ENCODE measurements at regions of chr22 and their contacts with region 1.

Region 1: GRCh38 chr22:19730655-19731360 is 7.5 kb downstream of the GP1BB start:
- DNase-seq: peak; percentile 89
- H3K4me3 Mint-ChIP-seq: peak overlapping the region; percentile 65
- H3K27ac Mint-ChIP-seq: no peak overlapping the region
- H3K4me1 Mint-ChIP-seq: peaks cover 4% of the 10 kb centered on the region
- H3K27me3 Mint-ChIP-seq: peaks cover 58% of the 10 kb centered on the region

Region 2: GRCh38 chr22:19756288-19757128 is 25.7 kb after region 1 on chr22:
- CTCF ChIA-PET with region 1: interaction called, 15 read pairs
- DNase-seq: peak; percentile 84
- H3K4me3 Mint-ChIP-seq: peak overlapping the region; percentile 60
- H3K27ac Mint-ChIP-seq: no peak overlapping the region
- H3K4me1 Mint-ChIP-seq: peaks cover 26% of the 10 kb centered on the region
- H3K27me3 Mint-ChIP-seq: peaks cover 97% of the 10 kb centered on the region

Region 3: GRCh38 chr22:19886601-19887255 is 155.9 kb after region 1 on chr22:
- CTCF ChIA-PET with region 1: interaction called, 11 read pairs
- DNase-seq: peak; percentile 62
- H3K4me3 Mint-ChIP-seq: no peak overlapping the region
- H3K27ac Mint-ChIP-seq: peak overlapping the region; percentile 91
- H3K4me1 Mint-ChIP-seq: peaks cover 47% of the 10 kb centered on the region
- H3K27me3 Mint-ChIP-seq: no peaks in the 10 kb centered on the region

Region 4: GRCh38 chr22:19903031-19903430 is 172.2 kb after region 1 on chr22:
- CTCF ChIA-PET with region 1: interaction called, 13 read pairs
- DNase-seq: no peak
- H3K4me3 Mint-ChIP-seq: no peak overlapping the region
- H3K27ac Mint-ChIP-seq: no peak overlapping the region
- H3K4me1 Mint-ChIP-seq: no peaks in the 10 kb centered on the region
- H3K27me3 Mint-ChIP-seq: no peaks in the 10 kb centered on the region

Region 5: GRCh38 chr22:19909350-19910179 is 178.8 kb after region 1 on chr22:
- CTCF ChIA-PET with region 1: interaction called, 103 read pairs
- DNase-seq: peak; percentile 90
- H3K4me3 Mint-ChIP-seq: no peak overlapping the region
- H3K27ac Mint-ChIP-seq: no peak overlapping the region
- H3K4me1 Mint-ChIP-seq: peaks cover 2% of the 10 kb centered on the region
- H3K27me3 Mint-ChIP-seq: no peaks in the 10 kb centered on the region